ENCODE measurements at regions of chr9 and their contacts with region 1.

Region 1: GRCh38 chr9:6353851-6354686 is 25.9 kb downstream of the TPD52L3 start:
- DNase-seq: peak; percentile 58 to 82 (median 80)
- H3K4me3 ChIP-seq: no peak overlapping the region
- H3K27ac ChIP-seq: no peak overlapping the region
- H3K4me1 ChIP-seq: no peaks in the 10 kb centered on the region
- H3K27me3 ChIP-seq: peaks cover 0 to 10% (median 4%) of the 10 kb centered on the region in 5 experiments

Region 2: GRCh38 chr9:6367128-6367890 is 13.2 kb after region 1 on chr9:
- CTCF ChIA-PET with region 1: interaction called, 14 read pairs
- POLR2A ChIA-PET with region 1: no interaction called
- DNase-seq: no peak
- H3K4me3 ChIP-seq: no peak overlapping the region
- H3K27ac ChIP-seq: no peak overlapping the region
- H3K4me1 ChIP-seq: no peaks in the 10 kb centered on the region
- H3K27me3 ChIP-seq: no peaks in the 10 kb centered on the region

Region 3: DNA sequence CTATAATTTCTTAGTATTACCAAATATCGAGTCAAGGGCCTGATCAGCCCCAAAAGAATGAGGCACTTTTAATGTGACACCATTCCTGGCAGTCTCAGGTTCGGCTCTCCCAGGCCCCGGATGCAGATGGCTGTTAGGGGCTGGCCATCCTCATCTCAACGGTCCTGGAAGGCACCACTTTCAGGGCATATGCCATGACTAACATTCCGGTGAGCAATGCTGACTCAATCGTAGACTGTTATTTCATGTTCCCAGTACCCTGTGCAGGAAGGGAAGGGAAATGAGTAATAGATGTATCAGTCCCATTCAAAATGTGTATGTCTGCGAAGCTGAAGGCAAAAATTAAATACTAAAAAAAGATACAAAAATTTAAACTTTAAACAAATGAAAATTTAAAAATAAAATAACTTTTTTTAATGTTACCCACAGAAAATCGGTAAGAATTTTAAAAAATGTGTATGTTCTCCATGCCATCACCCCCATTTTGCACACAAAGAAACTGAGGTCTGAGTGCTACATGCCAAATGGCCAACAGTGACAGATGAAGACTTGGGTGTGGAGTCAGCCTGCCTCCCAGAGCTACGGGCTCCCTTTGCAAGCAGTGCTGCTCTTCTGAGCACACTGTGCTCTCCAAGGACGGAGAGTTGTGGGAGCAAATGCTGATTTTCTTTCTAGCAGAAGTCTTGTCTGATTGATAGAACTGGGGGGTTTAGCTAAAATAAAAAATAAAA is 212.5 kb after region 1 on chr9:
- CTCF ChIA-PET with region 1: interaction called, 114 read pairs
- POLR2A ChIA-PET with region 1: no interaction called
- DNase-seq: no peak
- H3K4me3 ChIP-seq: no peak overlapping the region
- H3K27ac ChIP-seq: no peak overlapping the region
- H3K4me1 ChIP-seq: no peaks in the 10 kb centered on the region
- H3K27me3 ChIP-seq: no peaks in the 10 kb centered on the region

Region 4: DNA sequence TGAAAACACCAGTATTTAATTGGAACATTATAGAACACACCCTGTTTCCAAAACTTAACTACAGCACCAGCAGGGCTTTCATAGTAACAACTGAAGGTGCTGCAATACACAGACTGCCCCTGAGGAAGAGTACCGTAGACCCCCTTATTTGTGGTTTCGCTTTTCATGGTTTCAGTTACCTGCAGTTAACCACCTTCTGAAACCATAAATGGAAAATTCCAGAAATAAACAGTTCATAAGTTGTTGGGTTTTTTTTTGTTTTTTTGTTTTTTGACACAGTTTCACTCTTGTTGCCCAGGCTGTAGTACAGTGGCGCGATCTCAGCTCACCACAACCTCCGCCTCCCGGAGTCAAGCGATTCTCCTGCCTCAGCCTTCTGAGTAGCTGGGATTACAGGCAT is 301.0 kb after region 1 on chr9:
- CTCF ChIA-PET with region 1: no interaction called
- POLR2A ChIA-PET with region 1: no interaction called
- DNase-seq: no peak
- H3K4me3 ChIP-seq: no peak overlapping the region
- H3K27ac ChIP-seq: no peak overlapping the region
- H3K4me1 ChIP-seq: no peaks in the 10 kb centered on the region
- H3K27me3 ChIP-seq: peaks cover 0 to 19% (median 6%) of the 10 kb centered on the region in 5 experiments

Measured in common myeloid progenitor, CD34-positive (primary cell).